ENCODE measurements at regions of chr2 and their contacts with region 1.

Region 1: DNA sequence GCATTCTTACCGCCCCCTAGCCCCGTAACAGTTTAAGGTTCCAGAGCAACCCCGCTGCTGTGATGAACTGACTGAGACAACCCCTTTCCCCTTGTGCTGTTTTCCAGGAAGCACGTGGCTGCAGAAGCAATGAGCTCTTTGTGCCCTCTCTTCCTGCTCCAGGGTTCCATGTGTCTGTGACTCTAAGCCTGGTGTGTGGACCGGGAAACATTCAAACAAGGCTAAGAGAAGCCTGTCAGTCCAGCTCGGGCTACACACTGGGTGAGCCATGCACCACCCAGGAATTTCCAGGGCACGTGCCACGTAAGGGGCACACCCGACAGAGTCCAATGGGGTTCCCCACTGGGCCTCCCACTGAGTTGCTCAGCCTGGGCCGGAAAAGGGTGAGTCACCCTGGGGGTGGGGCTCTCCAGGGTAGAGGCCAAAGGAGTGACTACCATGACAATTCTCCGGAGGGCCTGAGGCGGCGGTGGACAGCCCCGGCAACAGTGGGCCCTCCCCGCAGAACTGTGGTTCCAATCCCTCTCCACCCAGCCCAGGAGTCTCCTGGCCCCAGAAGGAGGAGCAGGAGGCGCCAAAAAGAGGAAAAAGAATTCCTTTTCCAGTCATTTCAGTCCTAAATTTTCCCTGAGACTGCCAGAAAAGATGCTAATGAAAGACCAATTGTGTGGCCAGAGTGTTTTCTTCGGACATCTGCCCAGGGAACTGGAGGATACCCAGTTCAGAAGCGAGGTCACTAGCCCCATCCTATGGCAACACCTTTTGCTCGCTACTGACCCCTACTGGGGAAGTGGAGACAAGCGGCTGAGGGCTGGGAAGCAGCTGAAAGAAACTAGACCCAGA is 157.8 kb upstream of the SLC1A4 start:
- DNase-seq: peak; percentile 99
- ATAC-seq: peak; percentile 90
- H3K4me3 ChIP-seq: peak overlapping the region; percentile 31; the same call in 1 of the 2 replicates
- H3K27ac ChIP-seq: peak overlapping the region; percentile 93
- H3K4me1 ChIP-seq: peaks cover 61% of the 10 kb centered on the region
- H3K27me3 ChIP-seq: no peaks in the 10 kb centered on the region
- CTCF ChIP-seq: peak; percentile 96

Region 2: GRCh38 chr2:64644177-64645004 is 187.0 kb before region 1 on chr2:
- CTCF ChIA-PET with region 1: no interaction called
- POLR2A ChIA-PET with region 1: no interaction called
- intact Hi-C with region 1: loop called (anchors 1 kb)
- DNase-seq: peak; percentile 80
- ATAC-seq: peak; percentile 68
- H3K4me3 ChIP-seq: peak overlapping the region; percentile 67
- H3K27ac ChIP-seq: peak overlapping the region; percentile 92
- H3K4me1 ChIP-seq: peaks cover 87% of the 10 kb centered on the region
- H3K27me3 ChIP-seq: no peaks in the 10 kb centered on the region
- CTCF ChIP-seq: no peak

Region 3: GRCh38 chr2:64704161-64704560 is 127.2 kb before region 1 on chr2:
- CTCF ChIA-PET with region 1: no interaction called
- POLR2A ChIA-PET with region 1: no interaction called
- intact Hi-C with region 1: no loop called
- DNase-seq: no peak
- ATAC-seq: no peak
- H3K4me3 ChIP-seq: no peak overlapping the region
- H3K27ac ChIP-seq: no peak overlapping the region
- H3K4me1 ChIP-seq: peaks cover 9% of the 10 kb centered on the region
- H3K27me3 ChIP-seq: no peaks in the 10 kb centered on the region
- CTCF ChIP-seq: no peak

Region 4: GRCh38 chr2:64797881-64798575 is 33.3 kb before region 1 on chr2:
- CTCF ChIA-PET with region 1: no interaction called
- POLR2A ChIA-PET with region 1: interaction called, 4 read pairs
- intact Hi-C with region 1: loop called (anchors 1 kb)
- DNase-seq: peak; percentile 97
- ATAC-seq: peak; percentile 77
- H3K4me3 ChIP-seq: peak overlapping the region; percentile 13; the same call in 1 of the 2 replicates
- H3K27ac ChIP-seq: peak overlapping the region; percentile 74
- H3K4me1 ChIP-seq: peaks cover 58% of the 10 kb centered on the region
- H3K27me3 ChIP-seq: no peaks in the 10 kb centered on the region
- CTCF ChIP-seq: no peak

Region 5: DNA sequence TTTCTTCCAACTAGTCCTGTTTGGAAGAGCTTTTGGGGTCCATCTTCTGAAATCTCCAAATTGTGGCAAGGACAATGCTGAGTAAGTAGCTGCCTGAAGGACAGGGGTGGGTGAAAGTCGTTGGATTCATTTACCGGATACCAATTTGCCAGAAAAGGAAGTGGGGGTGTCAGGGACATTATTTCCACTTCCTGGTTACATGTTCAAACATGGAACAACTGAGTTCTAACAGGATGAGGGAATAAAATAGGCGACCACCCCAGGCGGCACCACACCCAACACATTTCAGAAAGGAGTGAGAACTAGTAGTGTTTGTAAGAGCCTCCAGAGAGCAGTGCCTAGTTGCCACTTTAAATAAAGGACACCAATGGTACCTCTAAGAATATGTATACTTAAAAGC is 19.1 kb before region 1 on chr2:
- CTCF ChIA-PET with region 1: no interaction called
- POLR2A ChIA-PET with region 1: no interaction called
- intact Hi-C with region 1: no loop called
- DNase-seq: no peak
- ATAC-seq: no peak
- H3K4me3 ChIP-seq: no peak overlapping the region
- H3K27ac ChIP-seq: no peak overlapping the region
- H3K4me1 ChIP-seq: peaks cover 8% of the 10 kb centered on the region
- H3K27me3 ChIP-seq: no peaks in the 10 kb centered on the region
- CTCF ChIP-seq: no peak

Region 6: DNA sequence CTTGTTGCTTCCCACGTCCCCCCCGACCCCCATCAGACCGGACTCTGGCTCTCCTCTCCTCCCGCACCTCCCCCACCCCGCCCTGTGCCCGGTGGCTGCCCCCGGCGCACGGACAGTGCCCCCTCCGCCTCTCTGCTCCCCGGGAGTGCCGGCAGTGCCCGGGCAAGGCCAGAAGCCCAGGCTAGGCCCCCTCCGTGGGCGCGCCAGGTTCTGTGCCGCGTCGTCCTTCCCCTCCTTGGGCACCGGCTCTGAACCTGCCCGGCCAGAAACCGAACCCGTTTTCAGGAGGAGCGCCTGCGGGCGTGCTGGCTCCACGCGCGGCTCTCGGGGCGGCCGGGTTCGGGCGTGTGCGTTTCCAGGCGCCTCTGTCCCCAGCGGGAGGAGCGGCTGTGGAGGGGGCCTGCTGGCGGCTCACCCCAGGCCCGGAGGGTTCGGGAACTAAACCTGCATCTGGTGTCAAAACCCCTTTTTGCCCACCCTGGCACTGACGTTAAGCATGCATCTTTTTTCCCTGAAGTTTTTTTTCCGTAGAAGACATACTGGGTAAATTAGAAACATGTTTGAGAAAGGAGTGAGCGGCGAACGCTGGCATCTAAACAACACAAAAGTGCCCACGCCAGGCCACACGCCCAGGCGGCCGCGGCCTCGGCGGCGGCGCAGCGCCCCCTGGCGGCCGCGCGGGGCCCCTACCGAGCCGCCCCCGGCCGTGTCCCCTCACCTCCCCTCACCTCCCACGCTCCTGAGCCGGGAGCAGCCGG is 33.9 kb after region 1 on chr2:
- CTCF ChIA-PET with region 1: no interaction called
- POLR2A ChIA-PET with region 1: no interaction called
- intact Hi-C with region 1: loop called (anchors 5 kb)
- DNase-seq: peak; percentile 73
- ATAC-seq: peak; percentile 82
- H3K4me3 ChIP-seq: peak overlapping the region; percentile 68
- H3K27ac ChIP-seq: peak overlapping the region; percentile 81
- H3K4me1 ChIP-seq: peaks cover 35% of the 10 kb centered on the region
- H3K27me3 ChIP-seq: no peaks in the 10 kb centered on the region
- CTCF ChIP-seq: peak; percentile 68

Region 7: DNA sequence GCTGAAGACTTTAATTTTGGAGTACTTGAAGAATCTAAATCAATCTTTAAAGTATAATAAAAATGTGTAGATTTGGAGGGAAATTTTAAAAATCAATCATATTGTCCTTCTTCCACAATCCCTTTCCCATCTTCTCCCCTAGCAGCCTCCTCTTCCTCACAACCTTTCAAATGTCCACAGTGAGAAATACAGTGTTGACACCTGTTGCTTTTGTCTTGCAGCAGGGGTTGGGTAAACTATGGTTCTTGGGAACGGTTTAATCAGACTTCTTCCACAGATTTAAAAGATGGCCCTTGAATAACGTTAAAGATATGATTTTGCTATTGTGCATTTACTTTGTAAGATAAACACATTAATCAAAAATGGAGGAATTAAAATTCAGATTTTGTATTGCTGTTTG is 44.0 kb after region 1 on chr2:
- CTCF ChIA-PET with region 1: no interaction called
- POLR2A ChIA-PET with region 1: no interaction called
- intact Hi-C with region 1: no loop called
- DNase-seq: no peak
- ATAC-seq: no peak
- H3K4me3 ChIP-seq: no peak overlapping the region
- H3K27ac ChIP-seq: peak overlapping the region; percentile 60
- H3K4me1 ChIP-seq: peaks cover 27% of the 10 kb centered on the region
- H3K27me3 ChIP-seq: no peaks in the 10 kb centered on the region
- CTCF ChIP-seq: no peak

Region 8: DNA sequence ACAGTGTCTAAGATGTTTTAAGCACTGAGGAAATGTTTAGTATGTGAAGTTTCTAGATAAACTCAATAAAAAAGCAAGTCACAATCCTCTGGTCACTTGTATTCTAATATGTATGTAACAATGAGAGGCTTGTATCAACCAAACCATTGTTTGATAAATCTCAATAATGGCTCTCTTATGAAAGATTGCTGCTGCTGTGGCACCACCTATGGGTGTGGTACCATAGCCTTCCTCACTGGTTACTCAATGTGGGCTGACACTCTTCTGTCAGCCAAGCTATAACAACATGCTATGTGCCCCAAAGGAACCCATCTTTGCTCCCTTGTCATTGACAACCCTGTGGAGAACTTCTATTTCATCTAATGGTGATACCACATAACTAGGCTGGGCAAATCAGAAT is 311.2 kb after region 1 on chr2:
- CTCF ChIA-PET with region 1: no interaction called
- POLR2A ChIA-PET with region 1: no interaction called
- intact Hi-C with region 1: no loop called
- DNase-seq: peak; percentile 55
- ATAC-seq: peak; percentile 91
- H3K4me3 ChIP-seq: no peak overlapping the region
- H3K27ac ChIP-seq: no peak overlapping the region
- H3K4me1 ChIP-seq: no peaks in the 10 kb centered on the region
- H3K27me3 ChIP-seq: no peaks in the 10 kb centered on the region
- CTCF ChIP-seq: peak; percentile 59